HEK293 (cell line): ENCODE measurements at regions of chr6 and their contacts with region 1.

Region 1: DNA sequence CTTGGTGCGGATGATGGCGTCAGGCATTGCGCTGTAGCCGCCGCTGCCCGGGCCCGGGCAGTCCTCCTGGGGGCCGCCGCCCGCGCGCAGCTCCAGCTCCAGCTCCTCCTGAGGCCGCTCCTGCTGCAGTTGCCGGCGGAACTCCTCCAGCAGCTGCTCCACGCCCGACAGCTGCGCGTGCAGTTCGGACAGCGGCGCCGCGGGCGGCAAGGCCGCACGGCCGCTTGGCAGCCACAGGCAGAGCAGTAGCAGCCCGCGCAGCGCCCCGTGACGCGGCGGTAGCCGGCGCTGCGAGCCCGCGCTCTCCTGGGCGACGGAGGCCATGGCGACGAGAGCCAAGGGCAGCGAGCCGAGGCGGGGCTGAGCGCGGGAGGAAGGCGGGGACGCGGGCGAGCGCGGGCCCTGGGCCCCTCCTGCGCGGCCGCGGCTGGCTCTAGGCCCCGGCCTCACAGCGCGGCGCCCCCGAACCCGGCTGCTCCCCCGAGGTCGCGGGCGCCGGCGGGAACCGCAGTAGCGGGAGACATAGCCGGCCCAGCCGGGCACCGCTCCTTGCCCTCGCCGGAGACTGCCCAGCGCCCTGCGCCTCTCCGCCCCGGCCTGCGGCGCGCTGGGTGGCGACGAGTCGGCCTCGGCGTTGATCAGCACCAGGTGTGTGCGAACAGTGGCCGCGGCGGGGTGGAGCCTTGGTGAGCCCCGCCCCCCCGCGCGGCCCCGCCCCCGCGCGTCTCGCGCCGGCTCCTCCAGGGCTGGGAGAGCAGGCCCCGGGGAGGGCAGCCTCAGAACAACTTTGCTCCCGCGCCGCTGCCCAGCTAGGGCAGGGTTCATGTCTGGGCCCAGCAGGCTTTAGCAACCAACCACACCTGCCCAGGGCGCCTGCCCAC is at the start of gene LRP11:
- H3K4me3 ChIP-seq: peak within 1 kb of the TSS; percentile 81
- H3K27ac ChIP-seq: peak within 1 kb of the TSS; percentile 93
- H3K4me1 ChIP-seq: peaks cover 29% of the 10 kb centered on the region
- CTCF ChIP-seq: no peak

Region 2: GRCh38 chr6:149823013-149823412 is 40.9 kb before region 1 on chr6:
- CTCF ChIA-PET with region 1: interaction called, 10 read pairs
- POLR2A ChIA-PET with region 1: no interaction called
- H3K4me3 ChIP-seq: no peak overlapping the region
- H3K27ac ChIP-seq: no peak overlapping the region
- H3K4me1 ChIP-seq: no peaks in the 10 kb centered on the region
- CTCF ChIP-seq: no peak

Region 3: DNA sequence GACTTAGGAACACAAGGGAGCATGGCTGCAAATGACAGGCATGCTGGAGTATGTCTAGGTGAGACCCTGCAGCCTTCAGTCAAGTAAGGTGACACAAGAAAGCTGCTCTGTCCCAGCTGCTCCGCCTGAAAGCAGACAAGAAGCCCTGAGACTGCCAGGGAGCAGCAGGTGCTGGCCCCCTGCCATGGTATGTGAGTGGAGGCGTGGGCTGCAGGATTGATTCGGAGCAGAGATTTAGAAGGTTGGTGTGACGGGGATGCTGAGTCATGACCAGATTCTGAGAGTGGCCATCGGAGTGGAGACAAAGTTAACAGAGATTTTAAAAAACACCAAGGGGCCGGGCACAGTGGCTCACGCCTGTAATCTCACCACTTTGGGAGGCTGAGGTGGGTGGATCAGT is 17.6 kb before region 1 on chr6:
- CTCF ChIA-PET with region 1: interaction called, 56 read pairs
- POLR2A ChIA-PET with region 1: interaction called, 17 read pairs
- H3K4me3 ChIP-seq: no peak overlapping the region
- H3K27ac ChIP-seq: no peak overlapping the region
- H3K4me1 ChIP-seq: peaks cover 16% of the 10 kb centered on the region
- CTCF ChIP-seq: no peak

Region 4: DNA sequence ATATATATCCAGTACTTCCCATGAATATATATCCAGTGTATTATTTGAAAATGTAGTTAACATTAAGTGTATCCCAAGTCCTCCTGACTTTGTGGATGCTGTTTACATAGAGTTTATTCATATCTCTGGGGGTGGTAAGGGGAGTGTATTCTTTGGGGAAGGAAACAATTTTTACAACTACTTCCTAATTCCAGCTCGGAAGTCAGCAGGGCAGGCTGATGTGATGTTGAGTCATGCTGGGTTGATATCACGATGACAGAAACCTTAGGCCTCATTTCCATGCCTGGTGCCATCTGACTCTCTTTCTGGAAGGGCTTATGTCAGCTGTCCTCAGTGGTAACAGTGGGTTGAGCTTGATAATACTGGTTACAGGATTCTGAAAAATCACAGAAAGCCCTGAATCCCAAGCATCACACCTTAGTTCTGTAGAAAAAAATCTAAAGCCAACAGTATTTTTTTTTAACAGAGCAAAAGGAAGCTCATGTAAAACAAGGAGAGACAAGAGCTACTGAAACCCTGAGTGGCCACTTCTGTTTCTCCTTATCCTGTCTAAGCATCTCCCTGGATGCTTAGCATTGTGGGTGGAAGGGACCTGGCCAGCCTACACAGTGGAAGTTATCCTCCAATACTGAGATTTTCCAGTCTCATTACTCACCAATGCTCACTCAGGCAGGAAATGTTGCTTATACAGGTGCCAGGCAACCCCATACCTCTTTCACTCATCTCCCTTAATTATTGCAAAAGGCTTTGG is 429.7 kb after region 1 on chr6:
- CTCF ChIA-PET with region 1: no interaction called
- POLR2A ChIA-PET with region 1: no interaction called
- H3K4me3 ChIP-seq: no peak overlapping the region
- H3K27ac ChIP-seq: no peak overlapping the region
- H3K4me1 ChIP-seq: no peaks in the 10 kb centered on the region
- CTCF ChIP-seq: no peak